Sigmoid colon (tissue), 7 donors: ENCODE measurements at regions of chr5 and their contacts with region 1.

Region 1: DNA sequence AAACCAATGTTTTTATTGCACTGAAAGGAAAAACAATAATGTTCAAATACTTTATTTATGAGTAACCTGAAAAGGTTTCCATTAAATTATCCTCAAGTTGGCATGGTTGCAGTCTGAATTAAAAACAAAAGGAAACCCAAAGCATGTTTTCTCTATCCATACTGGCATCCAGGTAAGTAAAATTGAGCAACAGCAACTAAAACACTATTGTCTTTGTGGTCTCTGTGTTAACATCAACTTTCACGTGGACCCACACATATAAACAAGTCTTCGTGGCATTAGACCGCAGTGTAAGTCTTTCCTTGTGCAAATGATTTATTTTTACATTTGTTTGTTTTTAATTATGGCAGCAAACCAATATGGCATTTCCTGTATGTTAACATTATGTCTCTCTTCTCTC is 757.6 kb downstream of the SEMA5A start:
- DNase-seq: no peak
- H3K4me3 ChIP-seq: no peak overlapping the region
- H3K27ac ChIP-seq: no peak overlapping the region
- H3K4me1 ChIP-seq: no peaks in the 10 kb centered on the region
- H3K27me3 ChIP-seq: no peaks in the 10 kb centered on the region
- CTCF ChIP-seq: no peak
- EP300 ChIP-seq: no peak
- POLR2A ChIP-seq: no peak

Region 2: GRCh38 chr5:8831854-8832253 is 43.6 kb after region 1 on chr5:
- intact Hi-C with region 1: loop called (anchors 1 kb)
- DNase-seq: no peak
- H3K4me3 ChIP-seq: no peak overlapping the region
- H3K27ac ChIP-seq: no peak overlapping the region
- H3K4me1 ChIP-seq: peaks cover 0 to 17% (median 8%) of the 10 kb centered on the region in 4 donors
- H3K27me3 ChIP-seq: no peaks in the 10 kb centered on the region
- CTCF ChIP-seq: no peak
- EP300 ChIP-seq: no peak
- POLR2A ChIP-seq: no peak

Region 3: GRCh38 chr5:9233712-9234111 is 445.5 kb after region 1 on chr5:
- intact Hi-C with region 1: no loop called
- DNase-seq: no peak
- H3K4me3 ChIP-seq: no peak overlapping the region
- H3K27ac ChIP-seq: no peak overlapping the region
- H3K4me1 ChIP-seq: no peaks in the 10 kb centered on the region
- H3K27me3 ChIP-seq: no peaks in the 10 kb centered on the region
- CTCF ChIP-seq: no peak
- EP300 ChIP-seq: no peak
- POLR2A ChIP-seq: no peak